ENCODE measurements at regions of chr18 and their contacts with region 1.

Region 1: GRCh38 chr18:5879479-5879882 is 15.8 kb downstream of the TMEM200C start:
- DNase-seq: peak; percentile 58
- ATAC-seq: peak; percentile 57
- H3K4me3 ChIP-seq: no peak overlapping the region
- H3K27ac ChIP-seq: no peak overlapping the region
- H3K4me1 ChIP-seq: no peaks in the 10 kb centered on the region
- H3K27me3 ChIP-seq: peaks cover 4% of the 10 kb centered on the region; the same call in 1 of the 2 replicates
- CTCF ChIP-seq: peak; percentile 90

Region 2: GRCh38 chr18:5556310-5556974 is 323.0 kb before region 1 on chr18:
- CTCF ChIA-PET with region 1: no interaction called
- POLR2A ChIA-PET with region 1: no interaction called
- intact Hi-C with region 1: no loop called
- DNase-seq: no peak
- ATAC-seq: no peak
- H3K4me3 ChIP-seq: no peak overlapping the region
- H3K27ac ChIP-seq: no peak overlapping the region
- H3K4me1 ChIP-seq: no peaks in the 10 kb centered on the region
- H3K27me3 ChIP-seq: no peaks in the 10 kb centered on the region; the same call in 1 of the 2 replicates
- CTCF ChIP-seq: no peak

Region 3: GRCh38 chr18:5951515-5952091 is 72.1 kb after region 1 on chr18:
- CTCF ChIA-PET with region 1: no interaction called
- POLR2A ChIA-PET with region 1: no interaction called
- intact Hi-C with region 1: no loop called
- DNase-seq: no peak
- ATAC-seq: peak; percentile 31; the same call in 1 of the 2 replicates
- H3K4me3 ChIP-seq: no peak overlapping the region
- H3K27ac ChIP-seq: no peak overlapping the region
- H3K4me1 ChIP-seq: no peaks in the 10 kb centered on the region
- H3K27me3 ChIP-seq: no peaks in the 10 kb centered on the region
- CTCF ChIP-seq: 0 out of 2 replicates have a peak, but pooled peaks have one; percentile 16

Region 4: DNA sequence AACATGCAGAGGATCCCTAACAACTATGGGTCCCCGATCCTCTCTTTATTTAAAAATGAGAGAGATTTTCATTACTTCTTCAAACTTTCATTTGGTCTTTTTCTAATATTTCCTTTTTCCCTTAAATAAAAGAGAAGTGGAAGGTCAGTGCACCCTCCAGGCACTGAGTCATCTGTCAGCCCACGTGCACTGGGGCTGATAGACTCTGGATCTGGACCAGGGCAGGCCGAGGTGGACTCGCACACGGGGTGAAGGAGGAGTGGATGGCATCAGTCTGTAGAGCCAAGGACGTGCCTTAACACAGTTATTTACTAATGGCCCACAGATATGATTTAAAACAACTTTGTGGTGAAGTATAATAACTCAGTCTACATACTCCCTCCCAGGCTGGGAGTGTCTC is 230.3 kb after region 1 on chr18:
- CTCF ChIA-PET with region 1: no interaction called
- POLR2A ChIA-PET with region 1: no interaction called
- intact Hi-C with region 1: no loop called
- DNase-seq: no peak
- ATAC-seq: no peak
- H3K4me3 ChIP-seq: no peak overlapping the region
- H3K27ac ChIP-seq: no peak overlapping the region
- H3K4me1 ChIP-seq: no peaks in the 10 kb centered on the region
- H3K27me3 ChIP-seq: no peaks in the 10 kb centered on the region
- CTCF ChIP-seq: no peak

Region 5: DNA sequence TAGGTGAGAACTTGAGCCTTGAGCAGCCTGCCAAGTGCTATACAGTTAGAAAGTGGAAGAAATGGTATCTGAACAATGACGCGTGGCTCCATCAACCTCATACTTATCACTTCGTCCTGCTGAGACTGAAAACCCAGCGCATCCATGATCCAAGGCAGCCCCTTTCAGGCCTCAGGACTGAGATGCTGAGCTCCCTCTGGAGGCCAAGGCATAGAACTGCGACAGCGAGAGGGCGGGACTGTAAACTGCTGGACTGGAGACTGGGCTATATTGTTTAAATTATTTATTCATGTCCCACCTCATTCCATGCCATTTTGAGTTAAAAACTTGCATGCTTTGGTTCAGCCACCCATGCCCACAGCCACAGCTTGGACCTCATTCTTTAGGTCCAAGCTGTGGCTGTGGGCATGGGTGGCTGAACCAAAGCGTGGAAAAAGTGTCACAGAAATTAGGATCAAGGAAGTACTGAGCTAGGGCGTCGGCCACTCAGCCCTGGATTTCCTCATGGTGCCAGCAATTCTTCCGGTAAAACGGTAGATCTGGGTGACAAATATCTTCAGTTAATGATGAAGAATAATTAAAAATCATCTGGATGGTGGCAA is 339.7 kb after region 1 on chr18:
- CTCF ChIA-PET with region 1: interaction called, 3 read pairs
- POLR2A ChIA-PET with region 1: no interaction called
- intact Hi-C with region 1: loop called (anchors 1 kb)
- DNase-seq: peak; percentile 78
- ATAC-seq: peak; percentile 89
- H3K4me3 ChIP-seq: no peak overlapping the region
- H3K27ac ChIP-seq: no peak overlapping the region
- H3K4me1 ChIP-seq: no peaks in the 10 kb centered on the region
- H3K27me3 ChIP-seq: no peaks in the 10 kb centered on the region
- CTCF ChIP-seq: peak; percentile 84

Region 6: DNA sequence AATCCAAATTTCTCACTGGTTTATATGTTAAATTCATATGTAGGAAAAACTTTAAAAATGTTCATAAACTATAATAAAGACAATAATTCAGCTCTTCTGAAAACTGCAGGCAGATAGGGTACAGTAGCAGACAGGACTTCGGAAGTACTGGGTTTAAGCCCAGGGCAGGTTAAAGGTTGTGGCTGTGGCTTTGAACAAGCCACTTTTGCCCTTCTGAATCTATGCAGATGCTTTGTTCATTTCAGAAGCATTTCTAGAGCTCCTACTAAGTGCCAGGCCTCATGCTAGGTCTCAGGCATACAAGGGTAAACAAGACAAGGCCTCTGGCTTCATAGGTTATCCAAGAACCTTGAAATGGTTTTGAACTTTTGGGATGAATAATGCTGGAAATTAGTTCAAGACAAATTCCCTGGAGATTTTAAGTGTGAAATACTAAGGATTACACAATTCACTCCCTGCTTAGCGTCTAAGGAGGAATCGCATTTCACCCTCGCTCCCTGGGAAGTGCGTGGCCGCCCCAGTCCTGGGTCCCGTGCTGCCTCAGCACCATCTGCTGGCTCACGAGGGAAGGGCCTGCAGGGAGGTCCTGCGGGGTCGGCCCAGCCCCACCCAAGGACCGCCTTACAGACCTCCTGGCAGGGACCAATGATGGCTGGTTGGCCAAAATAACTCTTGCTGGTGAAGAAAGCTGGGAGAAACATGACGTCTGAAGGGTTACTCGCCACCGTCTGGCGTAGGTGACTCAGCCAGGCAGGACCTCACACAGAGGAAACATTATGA is 602.9 kb after region 1 on chr18:
- CTCF ChIA-PET with region 1: interaction called, 3 read pairs
- POLR2A ChIA-PET with region 1: no interaction called
- intact Hi-C with region 1: loop called (anchors 1 kb)
- DNase-seq: peak; percentile 45
- ATAC-seq: peak; percentile 89
- H3K4me3 ChIP-seq: no peak overlapping the region
- H3K27ac ChIP-seq: no peak overlapping the region
- H3K4me1 ChIP-seq: 0 out of 2 replicates have a peak, but pooled peaks cover 4% of the 10 kb centered on the region
- H3K27me3 ChIP-seq: peaks cover 3% of the 10 kb centered on the region; the same call in 1 of the 2 replicates
- CTCF ChIP-seq: peak; percentile 70

Region 7: DNA sequence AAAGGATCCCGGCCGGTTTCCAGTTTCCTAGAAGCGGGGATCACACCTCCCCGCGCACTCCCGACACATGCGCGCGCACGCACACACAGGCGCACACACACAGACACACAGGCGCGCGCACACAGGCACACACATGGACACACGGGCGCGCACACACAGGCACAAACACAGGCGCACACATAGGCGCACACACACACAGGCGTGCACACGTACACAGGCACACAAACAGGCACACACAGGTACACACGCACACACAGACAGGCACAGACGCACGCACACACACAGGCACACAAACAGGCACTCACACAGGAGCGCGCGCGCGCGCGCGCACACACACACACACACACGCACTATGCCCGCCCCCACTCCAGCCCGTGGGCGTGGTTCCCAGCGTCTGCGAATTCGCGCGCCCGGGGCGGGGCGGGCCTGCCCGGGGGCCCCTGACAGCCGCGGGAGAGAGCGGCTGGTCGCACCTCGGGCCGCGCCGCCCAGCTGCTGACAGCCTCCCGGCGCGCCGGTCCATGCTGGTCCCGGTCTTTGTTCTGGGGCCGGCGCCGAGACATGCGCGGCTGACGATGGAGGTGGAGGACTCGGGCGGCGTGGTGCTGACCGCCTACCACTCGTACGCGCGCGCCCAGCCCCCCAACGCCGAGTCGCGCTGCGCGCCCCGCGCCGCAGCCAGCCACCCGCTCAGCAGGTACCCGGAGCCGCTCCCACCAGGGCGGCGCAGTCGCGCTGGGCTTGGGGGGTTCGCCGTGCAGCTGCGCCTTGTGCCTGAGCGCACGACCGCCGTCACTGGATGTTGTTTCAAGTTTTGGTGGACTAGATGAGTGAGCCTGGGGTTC is 850.0 kb after region 1 on chr18 and contains the start of gene ARHGAP28:
- CTCF ChIA-PET with region 1: no interaction called
- POLR2A ChIA-PET with region 1: no interaction called
- intact Hi-C with region 1: loop called (anchors 10 kb)
- DNase-seq: peak; percentile 89
- ATAC-seq: peak; percentile 74
- H3K4me3 ChIP-seq: peak within 1 kb of the TSS; percentile 67
- H3K27ac ChIP-seq: peak within 1 kb of the TSS; percentile 67
- H3K4me1 ChIP-seq: peaks cover 37% of the 10 kb centered on the region
- H3K27me3 ChIP-seq: no peaks in the 10 kb centered on the region
- CTCF ChIP-seq: peak; percentile 53
- total RNA-seq, gene ARHGAP28: 8.1 and 10.0 TPM in 2 replicates

Region 8: DNA sequence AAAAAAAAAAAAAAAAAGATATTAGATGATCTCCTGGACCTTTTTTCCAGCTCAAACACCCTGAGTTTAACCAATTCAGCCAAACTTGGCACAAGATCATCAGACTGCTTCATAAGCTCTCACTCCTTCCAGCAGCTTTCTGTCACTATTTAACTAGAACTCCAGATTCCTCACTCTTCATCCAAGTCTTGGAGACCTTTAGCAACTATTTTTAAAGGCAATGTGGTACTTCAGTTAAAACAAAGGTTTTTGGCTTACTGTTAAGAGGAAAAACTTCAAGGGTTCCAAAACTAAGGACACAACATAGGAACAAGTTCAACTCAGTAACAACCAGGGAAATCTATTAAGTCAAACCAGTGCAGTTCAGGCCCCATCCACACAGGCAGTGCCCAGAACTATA is 1215.0 kb after region 1 on chr18:
- CTCF ChIA-PET with region 1: no interaction called
- POLR2A ChIA-PET with region 1: interaction called, 13 read pairs
- intact Hi-C with region 1: no loop called
- DNase-seq: no peak
- ATAC-seq: no peak
- H3K4me3 ChIP-seq: no peak overlapping the region
- H3K27ac ChIP-seq: no peak overlapping the region
- H3K4me1 ChIP-seq: no peaks in the 10 kb centered on the region
- H3K27me3 ChIP-seq: peaks cover 77% of the 10 kb centered on the region
- CTCF ChIP-seq: no peak

Measured in PC-3 (cell line).